ENCODE measurements at regions of chr10 and their contacts with region 1.

Region 1: GRCh38 chr10:101214446-101215396 is 14.5 kb downstream of the LBX1 start:
- DNase-seq: peak; percentile 42 to 77 (median 67)
- ATAC-seq: peak; percentile 86
- H3K4me3 ChIP-seq: no peak overlapping the region
- H3K4me3 Mint-ChIP-seq: peak overlapping the region; percentile 48 to 90 (median 80)
- H3K27ac ChIP-seq: no peak overlapping the region
- H3K27ac Mint-ChIP-seq: peak overlapping the region in 2 of 9 donors; percentile 25 to 86
- H3K4me1 ChIP-seq: peaks cover 27 to 41% of the 10 kb centered on the region in 2 donors
- H3K4me1 Mint-ChIP-seq: peaks cover 12 to 48% (median 33%) of the 10 kb centered on the region in 7 donors
- H3K27me3 ChIP-seq: peaks cover 16 to 39% of the 10 kb centered on the region in 2 donors
- H3K27me3 Mint-ChIP-seq: peaks cover 67 to 94% (median 81%) of the 10 kb centered on the region in 5 donors

Region 2: GRCh38 chr10:100401631-100402328 is 812.9 kb before region 1 on chr10:
- CTCF ChIA-PET with region 1: no interaction called
- POLR2A ChIA-PET with region 1: no interaction called
- intact Hi-C with region 1: no loop called
- DNase-seq: no peak
- ATAC-seq: no peak
- H3K4me3 ChIP-seq: no peak overlapping the region
- H3K4me3 Mint-ChIP-seq: no peak overlapping the region
- H3K27ac ChIP-seq: no peak overlapping the region
- H3K27ac Mint-ChIP-seq: no peak overlapping the region
- H3K4me1 ChIP-seq: no peaks in the 10 kb centered on the region
- H3K4me1 Mint-ChIP-seq: no peaks in the 10 kb centered on the region
- H3K27me3 ChIP-seq: no peaks in the 10 kb centered on the region
- H3K27me3 Mint-ChIP-seq: peaks cover 0 to 6% (median 0%) of the 10 kb centered on the region in 5 donors

Region 3: DNA sequence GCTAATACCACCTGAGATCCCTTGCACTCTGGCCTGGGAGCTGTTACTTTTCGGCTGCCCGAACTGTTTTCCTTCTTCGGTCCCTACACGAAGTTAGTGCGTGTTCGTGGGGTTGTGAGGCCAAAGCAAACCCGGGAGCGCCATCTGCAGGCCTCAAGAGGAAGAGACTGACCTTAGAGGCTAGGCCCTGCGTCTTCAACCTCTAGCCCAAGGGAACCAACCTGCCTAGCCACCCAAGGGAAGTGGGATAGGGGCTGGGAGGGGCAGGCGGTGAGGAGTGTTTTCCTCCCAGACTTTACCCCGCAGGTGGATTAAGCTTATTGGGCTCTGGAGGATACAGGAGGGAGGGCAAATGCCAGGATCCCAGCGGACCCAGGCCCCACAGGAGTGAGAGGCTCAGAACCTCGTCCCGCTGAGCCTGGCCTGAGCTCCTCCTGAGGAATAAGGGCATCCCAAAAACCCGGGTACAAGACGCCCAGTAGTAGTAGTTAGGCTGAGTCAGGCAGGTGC is 471.0 kb before region 1 on chr10:
- CTCF ChIA-PET with region 1: no interaction called
- POLR2A ChIA-PET with region 1: no interaction called
- intact Hi-C with region 1: loop called in 1 of 2 experiments (anchors 5 kb)
- DNase-seq: peak in 6 of 9 donors; percentile 41 to 48 (median 44)
- ATAC-seq: peak; percentile 72
- H3K4me3 ChIP-seq: no peak overlapping the region
- H3K4me3 Mint-ChIP-seq: peak overlapping the region; percentile 23 to 72 (median 58)
- H3K27ac ChIP-seq: no peak overlapping the region
- H3K27ac Mint-ChIP-seq: peak overlapping the region in 1 of 9 donors; percentile 61
- H3K4me1 ChIP-seq: peaks cover 4 to 17% of the 10 kb centered on the region in 2 donors
- H3K4me1 Mint-ChIP-seq: peaks cover 27 to 56% (median 36%) of the 10 kb centered on the region in 7 donors
- H3K27me3 ChIP-seq: peaks cover 10 to 27% of the 10 kb centered on the region in 2 donors
- H3K27me3 Mint-ChIP-seq: peaks cover 60 to 88% (median 66%) of the 10 kb centered on the region in 5 donors

Region 4: DNA sequence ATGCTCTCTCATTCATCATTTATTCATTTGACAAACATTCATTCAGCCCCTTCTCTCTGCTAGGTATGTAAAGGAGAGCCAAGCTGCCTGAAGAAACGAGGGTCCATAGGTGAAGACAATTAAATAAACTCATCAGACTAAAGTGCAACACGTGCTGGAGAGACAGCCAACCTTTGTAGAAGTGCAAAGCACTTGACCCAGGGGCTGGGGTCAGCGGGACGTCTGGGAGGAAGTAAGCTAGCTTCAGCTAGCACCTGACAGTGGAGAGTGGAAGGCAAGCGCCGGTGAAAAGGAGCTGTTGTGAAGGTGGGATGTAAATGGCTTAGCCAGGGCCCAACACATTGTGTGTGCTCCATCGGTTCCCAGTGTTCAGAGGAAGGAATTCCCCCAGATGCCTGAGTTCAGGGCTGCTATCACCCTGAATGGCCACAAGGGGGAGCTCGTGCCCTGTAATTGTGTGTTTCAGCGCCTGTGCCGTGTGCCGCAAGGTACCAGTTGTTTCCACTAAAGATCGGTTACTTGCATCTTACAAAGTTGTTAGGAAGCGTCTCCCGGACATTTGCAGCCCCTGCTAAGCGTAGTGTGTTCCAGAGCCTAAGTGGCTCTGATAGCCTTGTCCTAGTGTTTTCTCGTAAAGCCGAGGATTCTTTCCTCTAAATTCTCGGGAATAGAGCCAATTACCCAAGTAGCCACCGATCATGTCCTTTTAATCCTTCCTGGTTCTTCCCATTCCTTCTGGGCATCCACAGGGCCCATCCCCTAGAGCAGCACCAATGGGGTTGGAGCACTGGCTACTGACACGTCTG is 53.0 kb before region 1 on chr10:
- CTCF ChIA-PET with region 1: no interaction called
- POLR2A ChIA-PET with region 1: no interaction called
- intact Hi-C with region 1: loop called in 1 of 2 experiments (anchors 2 kb)
- DNase-seq: peak; percentile 45 to 71 (median 65)
- ATAC-seq: peak; percentile 96
- H3K4me3 ChIP-seq: no peak overlapping the region
- H3K4me3 Mint-ChIP-seq: peak overlapping the region in 5 of 10 donors; percentile 20 to 51 (median 30)
- H3K27ac ChIP-seq: no peak overlapping the region
- H3K27ac Mint-ChIP-seq: peak overlapping the region in 1 of 9 donors; percentile 26
- H3K4me1 ChIP-seq: no peaks in the 10 kb centered on the region
- H3K4me1 Mint-ChIP-seq: peaks cover 9 to 16% (median 12%) of the 10 kb centered on the region in 7 donors
- H3K27me3 ChIP-seq: peaks cover 6 to 15% of the 10 kb centered on the region in 2 donors
- H3K27me3 Mint-ChIP-seq: peaks cover 49 to 78% (median 70%) of the 10 kb centered on the region in 5 donors

Region 5: GRCh38 chr10:101291331-101292193 is 76.8 kb after region 1 on chr10:
- CTCF ChIA-PET with region 1: interaction called, 14 read pairs
- POLR2A ChIA-PET with region 1: interaction called, 3 read pairs
- intact Hi-C with region 1: loop called (anchors 1 to 5 kb)
- DNase-seq: peak in 5 of 9 donors; percentile 22 to 29 (median 25)
- ATAC-seq: peak; percentile 60
- H3K4me3 ChIP-seq: peak overlapping the region; percentile 41
- H3K4me3 Mint-ChIP-seq: peak overlapping the region; percentile 73 to 92 (median 84)
- H3K27ac ChIP-seq: no peak overlapping the region
- H3K27ac Mint-ChIP-seq: no peak overlapping the region
- H3K4me1 ChIP-seq: peaks cover 0 to 10% of the 10 kb centered on the region in 2 donors
- H3K4me1 Mint-ChIP-seq: peaks cover 0 to 12% (median 7%) of the 10 kb centered on the region in 7 donors
- H3K27me3 ChIP-seq: peaks cover 11 to 15% of the 10 kb centered on the region in 2 donors
- H3K27me3 Mint-ChIP-seq: peaks cover 69 to 87% (median 79%) of the 10 kb centered on the region in 5 donors

Region 6: DNA sequence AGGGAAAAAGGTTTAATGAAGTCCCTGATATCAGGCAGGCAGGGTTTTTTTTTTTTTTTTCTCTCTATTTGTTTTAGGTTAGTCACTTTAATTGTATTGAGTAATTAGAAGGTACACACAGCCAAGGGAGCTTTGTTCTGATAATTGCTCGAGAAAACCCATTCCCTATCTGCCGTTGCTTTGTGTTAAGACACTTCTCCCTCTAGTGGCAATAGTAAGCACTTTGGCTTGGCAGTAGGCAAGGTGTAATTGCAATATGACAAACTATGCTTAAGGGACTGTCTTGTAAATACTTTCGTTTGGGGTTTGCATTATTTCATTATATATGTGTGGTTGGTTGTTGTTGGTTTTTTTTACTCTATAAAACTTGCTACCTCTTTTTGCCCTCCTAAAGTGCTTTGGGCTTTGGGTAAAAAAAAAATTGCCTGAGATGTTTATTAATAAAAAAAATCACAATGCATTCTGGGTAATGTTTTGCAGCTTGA is 252.6 kb after region 1 on chr10:
- CTCF ChIA-PET with region 1: interaction called, 28 read pairs
- POLR2A ChIA-PET with region 1: no interaction called
- intact Hi-C with region 1: loop called (anchors 1 kb)
- DNase-seq: peak in 7 of 9 donors; percentile 22 to 64 (median 52)
- ATAC-seq: peak; percentile 90
- H3K4me3 ChIP-seq: no peak overlapping the region
- H3K4me3 Mint-ChIP-seq: no peak overlapping the region
- H3K27ac ChIP-seq: no peak overlapping the region
- H3K27ac Mint-ChIP-seq: no peak overlapping the region
- H3K4me1 ChIP-seq: no peaks in the 10 kb centered on the region
- H3K4me1 Mint-ChIP-seq: peaks cover 0 to 12% (median 9%) of the 10 kb centered on the region in 7 donors
- H3K27me3 ChIP-seq: no peaks in the 10 kb centered on the region
- H3K27me3 Mint-ChIP-seq: peaks cover 0 to 3% (median 0%) of the 10 kb centered on the region in 5 donors

Region 7: GRCh38 chr10:101693978-101694673 is 479.4 kb after region 1 on chr10:
- CTCF ChIA-PET with region 1: no interaction called
- POLR2A ChIA-PET with region 1: no interaction called
- intact Hi-C with region 1: loop called in 1 of 2 experiments (anchors 5 kb)
- DNase-seq: peak; percentile 60 to 81 (median 73)
- ATAC-seq: peak; percentile 77
- H3K4me3 ChIP-seq: peak overlapping the region; percentile 57
- H3K4me3 Mint-ChIP-seq: peak overlapping the region; percentile 93 to 98 (median 96)
- H3K27ac ChIP-seq: peak overlapping the region; percentile 99
- H3K27ac Mint-ChIP-seq: peak overlapping the region; percentile 94 to 100 (median 99)
- H3K4me1 ChIP-seq: peaks cover 21 to 28% of the 10 kb centered on the region in 2 donors
- H3K4me1 Mint-ChIP-seq: peaks cover 33 to 59% (median 45%) of the 10 kb centered on the region in 7 donors
- H3K27me3 ChIP-seq: no peaks in the 10 kb centered on the region
- H3K27me3 Mint-ChIP-seq: no peaks in the 10 kb centered on the region

Region 8: DNA sequence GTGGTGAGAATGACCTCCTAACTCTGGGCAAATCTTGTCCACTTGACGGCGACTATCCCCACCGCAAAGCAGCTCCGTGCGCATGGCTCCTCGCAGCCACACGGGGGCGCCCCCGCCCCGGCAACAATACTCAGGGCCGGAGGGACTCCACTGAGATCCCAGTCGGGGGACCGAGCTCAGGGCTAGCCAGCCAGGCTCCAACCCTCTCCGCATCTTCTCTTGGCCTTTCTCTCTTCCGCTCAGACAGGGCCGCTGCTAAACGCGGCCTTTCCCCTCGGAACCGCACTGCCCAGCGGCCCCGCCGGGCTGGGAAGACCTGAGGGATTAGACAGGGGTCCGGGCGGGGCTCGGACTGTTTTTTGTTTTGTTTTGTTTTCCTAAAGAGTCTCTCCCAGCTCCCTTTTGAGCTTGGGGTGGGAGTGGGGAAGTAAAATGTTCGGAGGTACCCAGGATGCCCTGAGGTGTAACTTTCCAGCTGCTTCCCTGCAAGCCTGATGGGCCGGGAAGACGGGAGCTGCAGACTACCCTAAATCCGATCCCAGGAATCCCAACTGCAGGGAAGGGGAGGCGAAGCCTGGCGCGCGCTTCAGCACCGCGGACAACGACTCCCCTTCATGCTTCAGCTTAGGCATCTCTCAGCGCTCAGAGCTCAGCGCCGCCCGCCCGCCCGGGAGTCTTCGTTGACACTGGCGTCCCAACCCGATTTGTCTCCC is 626.2 kb after region 1 on chr10:
- CTCF ChIA-PET with region 1: no interaction called
- POLR2A ChIA-PET with region 1: no interaction called
- intact Hi-C with region 1: loop called in 1 of 2 experiments (anchors 5 kb)
- DNase-seq: peak; percentile 35 to 83 (median 58)
- ATAC-seq: peak; percentile 76
- H3K4me3 ChIP-seq: peak overlapping the region; percentile 55
- H3K4me3 Mint-ChIP-seq: peak overlapping the region; percentile 72 to 91 (median 85)
- H3K27ac ChIP-seq: no peak overlapping the region
- H3K27ac Mint-ChIP-seq: peak overlapping the region in 5 of 9 donors; percentile 50 to 87 (median 79)
- H3K4me1 ChIP-seq: peaks cover 13 to 36% of the 10 kb centered on the region in 2 donors
- H3K4me1 Mint-ChIP-seq: peaks cover 34 to 65% (median 55%) of the 10 kb centered on the region in 7 donors
- H3K27me3 ChIP-seq: no peaks in the 10 kb centered on the region
- H3K27me3 Mint-ChIP-seq: peaks cover 0 to 19% (median 4%) of the 10 kb centered on the region in 5 donors